Endothelial cell of umbilical vein (primary cell): ENCODE measurements at regions of chr10 and their contacts with region 1.

Region 1: DNA sequence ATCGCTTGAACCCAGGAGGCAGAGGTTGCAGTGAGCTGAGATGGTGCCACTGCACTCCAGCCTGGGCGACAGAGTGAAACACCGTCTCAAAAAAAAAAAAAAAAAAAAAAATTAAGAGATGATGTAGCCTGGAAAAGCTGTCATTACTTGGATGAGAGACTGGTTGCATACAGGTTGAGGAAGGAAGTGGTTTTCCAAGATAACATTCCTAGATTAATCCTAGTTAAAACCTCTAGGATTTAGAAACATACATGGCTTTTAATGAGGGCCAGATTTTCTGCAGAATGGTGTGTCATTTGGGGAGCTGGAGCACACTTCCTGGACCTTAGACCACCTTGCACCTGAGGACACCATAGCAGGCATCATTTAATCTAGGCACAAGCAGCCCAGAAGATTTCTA is 17.8 kb downstream of the VWA2 start:
- DNase-seq: no peak
- H3K4me3 ChIP-seq: no peak overlapping the region
- H3K27ac ChIP-seq: no peak overlapping the region
- H3K4me1 ChIP-seq: no peaks in the 10 kb centered on the region
- H3K27me3 ChIP-seq: no peaks in the 10 kb centered on the region
- CTCF ChIP-seq: no peak
- POLR2A ChIP-seq: no peak

Region 2: GRCh38 chr10:114208351-114208750 is 48.5 kb before region 1 on chr10:
- CTCF ChIA-PET with region 1: no interaction called
- POLR2A ChIA-PET with region 1: no interaction called
- dilution Hi-C with region 1: no loop called
- intact Hi-C with region 1: loop called (anchors 1 kb)
- DNase-seq: no peak
- H3K4me3 ChIP-seq: no peak overlapping the region
- H3K27ac ChIP-seq: no peak overlapping the region
- H3K4me1 ChIP-seq: no peaks in the 10 kb centered on the region
- H3K27me3 ChIP-seq: peaks cover 2 to 3% of the 10 kb centered on the region in 2 experiments
- CTCF ChIP-seq: no peak
- POLR2A ChIP-seq: no peak

Region 3: DNA sequence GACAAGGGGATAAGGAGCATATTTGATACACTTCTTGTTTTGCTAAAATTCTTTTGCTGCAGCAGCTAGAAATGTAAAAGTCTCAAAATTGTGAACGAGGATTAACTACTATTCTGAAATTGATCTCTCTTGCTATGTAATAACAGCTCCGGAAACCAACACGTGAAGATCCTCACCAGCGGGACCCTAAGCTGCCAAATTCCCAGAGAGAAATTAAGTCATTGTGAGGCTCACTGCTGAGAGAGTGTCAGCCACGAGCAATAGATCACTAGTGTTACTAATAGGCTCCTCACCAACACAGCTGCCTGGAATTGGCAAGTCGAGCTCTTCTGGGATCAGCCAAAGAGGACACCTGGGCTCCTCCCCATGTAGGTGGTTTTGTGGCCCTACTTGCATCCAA is 23.3 kb before region 1 on chr10:
- CTCF ChIA-PET with region 1: no interaction called
- POLR2A ChIA-PET with region 1: no interaction called
- dilution Hi-C with region 1: no loop called
- intact Hi-C with region 1: no loop called
- DNase-seq: no peak
- H3K4me3 ChIP-seq: no peak overlapping the region
- H3K27ac ChIP-seq: no peak overlapping the region
- H3K4me1 ChIP-seq: no peaks in the 10 kb centered on the region
- H3K27me3 ChIP-seq: peaks cover 12 to 20% of the 10 kb centered on the region in 2 experiments
- CTCF ChIP-seq: no peak
- POLR2A ChIP-seq: no peak